CD4-positive, alpha-beta memory T cell (primary cell): ENCODE measurements at regions of chr4 and their contacts with region 1.

Region 1: GRCh38 chr4:88533937-88534750 is 10.6 kb upstream of the PYURF start:
- DNase-seq: no peak
- H3K4me3 ChIP-seq: no peak overlapping the region
- H3K4me3 Mint-ChIP-seq: no peak overlapping the region
- H3K27ac ChIP-seq: no peak overlapping the region
- H3K27ac Mint-ChIP-seq: no peak overlapping the region
- H3K4me1 ChIP-seq: peaks cover 3% of the 10 kb centered on the region
- H3K4me1 Mint-ChIP-seq: peaks cover 0 to under 1% (median 0%) of the 10 kb centered on the region in 4 donors
- H3K27me3 ChIP-seq: no peaks in the 10 kb centered on the region
- H3K27me3 Mint-ChIP-seq: no peaks in the 10 kb centered on the region

Region 2: DNA sequence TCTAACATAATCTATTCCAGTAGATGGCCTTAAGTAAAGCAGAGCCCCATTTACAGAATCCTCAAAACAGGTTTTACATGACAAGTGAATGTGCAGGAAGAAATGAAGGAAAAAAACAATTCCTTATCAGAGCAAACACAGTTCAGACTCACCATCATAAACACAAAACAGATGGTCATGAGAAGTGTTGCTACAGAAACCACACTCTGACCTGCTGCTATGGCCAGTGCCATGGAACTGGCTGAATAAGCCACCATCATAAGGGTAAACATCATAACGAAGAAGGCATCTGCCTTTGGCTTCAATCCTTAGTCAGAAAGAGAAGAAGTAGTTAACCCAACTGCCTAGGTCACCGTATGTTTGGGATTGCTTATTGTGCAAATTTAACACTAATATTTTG is 436.8 kb before region 1 on chr4:
- CTCF ChIA-PET with region 1: no interaction called
- POLR2A ChIA-PET with region 1: no interaction called
- intact Hi-C with region 1: no loop called
- DNase-seq: no peak
- H3K4me3 ChIP-seq: no peak overlapping the region
- H3K4me3 Mint-ChIP-seq: no peak overlapping the region
- H3K27ac ChIP-seq: no peak overlapping the region
- H3K27ac Mint-ChIP-seq: no peak overlapping the region
- H3K4me1 ChIP-seq: no peaks in the 10 kb centered on the region
- H3K4me1 Mint-ChIP-seq: no peaks in the 10 kb centered on the region
- H3K27me3 ChIP-seq: no peaks in the 10 kb centered on the region
- H3K27me3 Mint-ChIP-seq: peaks cover 0 to 1% of the 10 kb centered on the region in 2 donors

Region 3: GRCh38 chr4:88583631-88584475 is 49.7 kb after region 1 on chr4:
- CTCF ChIA-PET with region 1: interaction called, 12 read pairs
- POLR2A ChIA-PET with region 1: no interaction called
- intact Hi-C with region 1: no loop called
- DNase-seq: no peak
- H3K4me3 ChIP-seq: no peak overlapping the region
- H3K4me3 Mint-ChIP-seq: no peak overlapping the region
- H3K27ac ChIP-seq: no peak overlapping the region
- H3K27ac Mint-ChIP-seq: no peak overlapping the region
- H3K4me1 ChIP-seq: no peaks in the 10 kb centered on the region
- H3K4me1 Mint-ChIP-seq: no peaks in the 10 kb centered on the region
- H3K27me3 ChIP-seq: no peaks in the 10 kb centered on the region
- H3K27me3 Mint-ChIP-seq: no peaks in the 10 kb centered on the region

Region 4: DNA sequence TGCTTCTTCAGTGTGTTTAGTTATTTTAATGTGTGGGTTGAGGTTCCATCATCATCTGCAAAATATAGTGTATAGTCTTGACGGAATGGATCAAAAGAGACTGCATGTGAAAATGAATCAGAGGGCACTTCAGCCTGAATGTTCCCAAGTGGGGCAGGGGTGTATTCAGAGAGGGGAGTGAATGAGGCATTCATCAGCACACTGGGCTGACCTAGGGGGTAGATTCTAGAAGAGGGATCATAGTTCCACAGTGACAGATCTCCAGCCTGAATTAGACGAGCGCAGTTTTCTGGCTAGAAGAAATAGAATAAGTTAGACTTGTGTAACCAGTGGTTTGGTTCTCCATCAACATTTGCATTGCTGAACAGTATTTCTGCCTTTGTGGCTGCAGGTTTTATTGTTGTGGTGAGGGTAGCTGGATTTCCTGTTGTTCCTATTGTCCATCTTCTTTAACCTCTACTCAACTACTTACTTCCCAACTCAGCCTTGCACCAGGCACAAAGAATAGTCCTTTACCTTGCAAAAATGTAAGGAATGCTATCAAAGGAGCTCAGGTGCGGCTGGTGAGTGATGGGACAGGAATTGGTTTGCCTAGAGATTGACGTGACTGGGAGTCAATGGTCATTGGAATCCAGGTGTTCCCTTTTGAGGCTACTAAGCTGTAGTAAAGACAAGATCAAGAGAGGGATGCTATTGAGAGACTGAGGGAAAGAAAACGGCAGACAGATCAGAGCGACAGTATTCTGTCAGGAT is 112.6 kb after region 1 on chr4:
- CTCF ChIA-PET with region 1: interaction called, 11 read pairs
- POLR2A ChIA-PET with region 1: no interaction called
- intact Hi-C with region 1: no loop called
- DNase-seq: no peak
- H3K4me3 ChIP-seq: no peak overlapping the region
- H3K4me3 Mint-ChIP-seq: peak overlapping the region in 2 of 8 donors; percentile 7 to 22
- H3K27ac ChIP-seq: no peak overlapping the region
- H3K27ac Mint-ChIP-seq: peak overlapping the region in 4 of 7 donors; percentile 14 to 73 (median 42)
- H3K4me1 ChIP-seq: peaks cover 29% of the 10 kb centered on the region
- H3K4me1 Mint-ChIP-seq: peaks cover 45 to 58% (median 50%) of the 10 kb centered on the region in 4 donors
- H3K27me3 ChIP-seq: no peaks in the 10 kb centered on the region
- H3K27me3 Mint-ChIP-seq: no peaks in the 10 kb centered on the region

Region 5: DNA sequence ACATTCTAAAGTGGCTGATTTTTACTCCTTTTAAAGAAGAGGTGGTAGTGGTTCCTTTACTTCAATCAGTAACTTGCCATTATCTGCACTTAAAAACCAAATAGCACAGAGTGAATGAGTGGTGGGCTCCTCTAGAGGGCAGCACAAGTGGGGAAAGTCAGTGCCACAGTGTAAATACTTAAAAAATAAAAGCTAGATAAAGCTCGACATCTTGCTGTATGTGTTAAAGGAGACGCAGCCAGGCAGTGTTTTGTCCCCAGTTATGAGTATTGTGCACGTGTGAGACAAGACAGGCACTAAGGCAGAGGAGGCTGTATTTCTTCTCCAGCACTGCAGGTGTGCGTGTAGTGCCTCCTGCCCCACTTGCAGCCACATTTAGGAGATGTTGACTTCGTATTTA is 138.8 kb after region 1 on chr4:
- CTCF ChIA-PET with region 1: interaction called, 10 read pairs
- POLR2A ChIA-PET with region 1: no interaction called
- intact Hi-C with region 1: no loop called
- DNase-seq: peak in 3 of 5 donors; percentile 12 to 25 (median 20)
- H3K4me3 ChIP-seq: no peak overlapping the region
- H3K4me3 Mint-ChIP-seq: no peak overlapping the region
- H3K27ac ChIP-seq: no peak overlapping the region
- H3K27ac Mint-ChIP-seq: peak overlapping the region in 3 of 7 donors; percentile 9 to 38 (median 12)
- H3K4me1 ChIP-seq: no peaks in the 10 kb centered on the region
- H3K4me1 Mint-ChIP-seq: peaks cover 0 to 5% (median 4%) of the 10 kb centered on the region in 4 donors
- H3K27me3 ChIP-seq: no peaks in the 10 kb centered on the region
- H3K27me3 Mint-ChIP-seq: no peaks in the 10 kb centered on the region

Region 6: GRCh38 chr4:88823058-88823919 is 289.1 kb after region 1 on chr4:
- CTCF ChIA-PET with region 1: interaction called, 9 read pairs
- POLR2A ChIA-PET with region 1: no interaction called
- intact Hi-C with region 1: loop called (anchors 1 kb)
- DNase-seq: peak; percentile 79 to 91 (median 88)
- H3K4me3 ChIP-seq: peak overlapping the region; percentile 57 to 72
- H3K4me3 Mint-ChIP-seq: peak overlapping the region; percentile 89 to 98 (median 94)
- H3K27ac ChIP-seq: peak overlapping the region; percentile 71
- H3K27ac Mint-ChIP-seq: peak overlapping the region; percentile 92 to 99 (median 98)
- H3K4me1 ChIP-seq: peaks cover 33% of the 10 kb centered on the region
- H3K4me1 Mint-ChIP-seq: peaks cover 23 to 45% (median 32%) of the 10 kb centered on the region in 4 donors
- H3K27me3 ChIP-seq: no peaks in the 10 kb centered on the region
- H3K27me3 Mint-ChIP-seq: peaks cover 0 to under 1% of the 10 kb centered on the region in 2 donors